ENCODE measurements at regions of chr18 and their contacts with region 1.

Region 1: GRCh38 chr18:74551936-74552555 is 17.7 kb downstream of the CNDP1 start:
- DNase-seq: peak; percentile 89
- H3K4me3 ChIP-seq: no peak overlapping the region
- H3K27ac ChIP-seq: no peak overlapping the region
- H3K4me1 ChIP-seq: peaks cover under 1 to 9% of the 10 kb centered on the region in 2 donors
- H3K27me3 ChIP-seq: no peaks in the 10 kb centered on the region
- CTCF ChIP-seq: peak; percentile 66 to 85 (median 80)
- POLR2A ChIP-seq: no peak

Region 2: DNA sequence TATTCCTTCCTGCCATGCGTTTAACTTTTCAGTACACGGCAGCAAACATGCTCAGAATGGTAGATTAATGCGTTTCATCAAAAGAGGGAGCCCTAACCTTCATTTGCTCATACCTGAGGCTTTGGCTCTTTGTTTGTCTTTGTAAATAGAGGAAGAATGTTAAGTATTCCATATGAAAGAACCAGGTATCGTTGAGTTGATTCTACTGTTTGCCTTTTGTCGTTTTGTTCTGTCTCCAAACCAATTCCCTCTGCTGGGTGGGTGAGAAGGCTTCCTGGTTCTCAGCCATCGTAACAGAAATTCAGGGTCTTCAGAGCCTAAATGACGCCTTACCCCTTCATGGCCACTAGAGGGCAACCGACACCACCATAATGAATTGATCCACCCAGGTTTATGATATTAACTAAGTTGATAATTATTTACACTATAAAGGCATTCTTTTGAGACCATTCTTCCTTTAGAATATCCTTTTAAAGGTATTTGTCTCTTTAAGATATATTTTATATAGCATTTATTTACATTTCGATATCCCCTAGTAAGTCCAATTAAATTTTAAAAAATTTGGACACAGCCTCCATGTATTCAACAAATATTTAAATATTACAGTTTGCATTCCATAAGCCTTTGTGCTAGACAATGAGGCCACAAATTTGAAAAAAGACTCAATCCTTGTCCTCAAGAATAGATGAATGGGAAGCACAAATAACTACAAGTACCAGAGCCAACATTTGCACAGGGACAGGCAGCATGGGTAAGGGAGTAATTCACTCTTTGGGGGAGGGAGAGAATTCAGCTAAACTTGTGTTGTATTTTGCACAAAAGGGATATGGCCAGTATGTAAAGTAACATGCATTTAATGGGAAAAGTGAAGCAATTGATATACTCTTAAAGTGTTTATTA is 355.6 kb before region 1 on chr18:
- intact Hi-C with region 1: loop called (anchors 5 kb)
- DNase-seq: peak; percentile 26 to 35
- H3K4me3 ChIP-seq: no peak overlapping the region
- H3K27ac ChIP-seq: no peak overlapping the region
- H3K4me1 ChIP-seq: no peaks in the 10 kb centered on the region
- H3K27me3 ChIP-seq: no peaks in the 10 kb centered on the region
- CTCF ChIP-seq: peak; percentile 73 to 86 (median 84)
- POLR2A ChIP-seq: no peak

Region 3: GRCh38 chr18:74353169-74353775 is 198.8 kb before region 1 on chr18:
- intact Hi-C with region 1: loop called (anchors 2 kb)
- DNase-seq: peak; percentile 66 to 67
- H3K4me3 ChIP-seq: no peak overlapping the region
- H3K27ac ChIP-seq: no peak overlapping the region
- H3K4me1 ChIP-seq: no peaks in the 10 kb centered on the region
- H3K27me3 ChIP-seq: no peaks in the 10 kb centered on the region
- CTCF ChIP-seq: peak; percentile 11 to 83 (median 69)
- POLR2A ChIP-seq: no peak